IMR-90 (cell line): ENCODE measurements at regions of chr16 and their contacts with region 1.

Region 1: DNA sequence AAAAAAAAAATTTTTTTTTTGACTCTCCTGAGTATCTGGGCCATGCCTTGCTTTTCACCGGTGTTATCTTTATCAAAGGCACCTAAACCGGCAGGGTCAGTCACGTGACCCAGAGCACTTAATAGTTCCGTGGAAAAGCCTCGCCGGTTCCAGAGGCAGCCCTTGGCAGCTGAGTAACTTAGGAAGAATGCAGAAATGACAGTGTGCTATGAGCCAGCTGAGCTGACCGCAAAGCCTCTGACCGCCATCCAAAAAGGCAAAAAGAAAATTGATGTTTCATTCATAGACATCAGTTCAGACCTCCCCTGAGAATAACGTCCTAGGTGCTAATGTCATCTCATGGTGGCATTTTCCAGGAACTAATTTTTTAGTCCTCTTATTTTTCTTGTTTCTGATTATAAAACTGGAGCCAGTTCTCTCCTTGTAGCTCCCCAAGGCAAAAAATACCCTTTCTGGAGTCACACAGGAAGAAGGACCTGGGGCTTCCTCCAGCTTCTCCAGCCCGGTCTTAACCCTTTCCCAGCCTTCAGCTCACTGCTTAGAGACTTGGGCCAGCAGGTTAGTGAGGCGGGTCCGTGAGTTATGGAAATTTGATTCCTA is 122.6 kb downstream of the SOCS1 start:
- DNase-seq: peak; percentile 96
- ATAC-seq: peak; percentile 86
- H3K4me3 ChIP-seq: no peak overlapping the region
- H3K27ac ChIP-seq: peak overlapping the region; percentile 74
- H3K4me1 ChIP-seq: peaks cover 45% of the 10 kb centered on the region
- H3K27me3 ChIP-seq: no peaks in the 10 kb centered on the region
- CTCF ChIP-seq: no peak
- POLR2A ChIP-seq: no peak
- RAD21 ChIP-seq: peak; percentile 29

Region 2: DNA sequence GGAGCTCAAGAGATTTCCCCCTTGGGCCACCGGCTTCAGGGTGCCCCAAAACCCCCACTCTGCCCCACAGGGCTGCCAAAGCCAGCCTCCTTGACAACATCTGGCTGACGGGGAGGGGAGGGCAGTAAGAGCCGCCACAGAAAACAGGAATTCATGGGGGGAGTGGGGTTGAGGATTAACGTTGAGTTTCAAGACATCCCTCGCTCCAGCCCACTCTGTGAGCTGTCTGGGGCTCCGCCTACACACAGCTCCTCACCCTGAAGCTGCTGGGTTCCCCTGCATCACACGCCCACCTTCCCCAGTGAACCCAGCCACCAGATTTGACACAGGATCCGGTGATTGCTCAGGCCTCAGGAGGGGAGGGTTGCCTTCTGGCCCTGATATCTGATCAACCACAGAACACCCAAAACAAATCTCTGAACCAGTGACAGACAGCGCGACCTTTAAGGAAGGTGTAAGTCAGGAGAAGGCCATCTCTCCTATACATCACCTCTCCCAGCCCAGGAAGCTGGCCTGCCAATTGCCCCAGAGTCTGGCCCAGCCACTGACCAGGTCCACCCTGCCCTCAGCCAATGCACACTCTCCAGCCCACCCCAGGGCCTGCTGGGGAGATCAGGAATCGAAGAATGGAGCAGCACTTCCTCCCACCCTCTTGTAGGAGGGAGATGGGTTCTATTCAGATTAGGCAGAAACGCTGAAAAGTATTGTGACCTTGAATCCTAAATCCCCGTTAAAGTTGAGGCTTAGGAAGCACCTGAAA is 57.0 kb before region 1 on chr16:
- CTCF ChIA-PET with region 1: no interaction called
- POLR2A ChIA-PET with region 1: no interaction called
- dilution Hi-C with region 1: no loop called
- in situ Hi-C with region 1: no loop called
- intact Hi-C with region 1: loop called (anchors 2 kb)
- DNase-seq: peak; percentile 44
- ATAC-seq: no peak
- H3K4me3 ChIP-seq: no peak overlapping the region
- H3K27ac ChIP-seq: peak overlapping the region; percentile 28; the same call in 1 of the 2 replicates
- H3K4me1 ChIP-seq: peaks cover 41% of the 10 kb centered on the region
- H3K27me3 ChIP-seq: no peaks in the 10 kb centered on the region
- CTCF ChIP-seq: no peak
- POLR2A ChIP-seq: no peak
- RAD21 ChIP-seq: no peak

Region 3: DNA sequence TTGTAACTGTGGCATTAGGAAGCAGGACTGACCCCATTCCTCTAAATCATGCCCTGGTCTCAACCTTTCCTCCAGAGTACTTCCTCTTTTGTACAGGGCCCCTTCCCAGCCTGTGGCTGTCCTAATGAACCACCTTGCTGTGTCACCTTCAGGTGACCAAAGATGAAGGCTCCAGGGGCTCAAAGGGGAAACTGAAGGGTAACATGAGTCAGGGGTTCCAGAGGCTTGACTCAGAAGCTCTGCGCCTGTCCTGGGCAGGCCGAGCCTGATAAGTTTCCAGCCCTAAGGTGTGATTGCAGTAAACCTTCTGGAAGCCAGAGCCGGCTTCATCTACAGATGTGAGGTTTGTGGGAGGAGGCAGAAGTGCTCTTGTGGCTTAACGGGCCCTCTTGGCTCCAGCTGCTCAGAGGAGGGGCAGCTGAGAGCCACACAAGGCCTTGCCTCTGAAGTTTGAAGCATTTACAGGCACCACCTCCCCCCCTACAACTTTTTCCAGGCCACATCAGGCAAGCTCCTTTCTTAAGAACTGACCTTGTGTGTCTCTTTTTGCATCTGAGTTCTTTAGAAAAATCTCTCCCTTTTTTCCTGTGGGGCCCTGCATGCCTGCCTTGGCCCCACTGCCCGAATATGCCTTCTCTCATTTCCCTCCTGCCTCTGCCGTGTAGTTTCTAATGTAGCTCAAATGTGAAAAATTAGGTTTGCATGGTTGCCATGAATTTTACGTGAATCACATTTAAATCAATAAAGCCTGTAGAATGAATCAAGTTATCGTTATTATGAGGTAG is 39.2 kb before region 1 on chr16:
- CTCF ChIA-PET with region 1: no interaction called
- POLR2A ChIA-PET with region 1: no interaction called
- dilution Hi-C with region 1: no loop called
- in situ Hi-C with region 1: no loop called
- intact Hi-C with region 1: loop called (anchors 1 kb)
- DNase-seq: peak; percentile 86
- ATAC-seq: peak; percentile 41
- H3K4me3 ChIP-seq: no peak overlapping the region
- H3K27ac ChIP-seq: peak overlapping the region; percentile 71
- H3K4me1 ChIP-seq: peaks cover 37% of the 10 kb centered on the region
- H3K27me3 ChIP-seq: no peaks in the 10 kb centered on the region
- CTCF ChIP-seq: no peak
- POLR2A ChIP-seq: no peak
- RAD21 ChIP-seq: no peak